ENCODE measurements at regions of chr11 and their contacts with region 1.

Region 1: GRCh38 chr11:102287964-102288724 is 29.1 kb upstream of the BIRC3 start:
- DNase-seq: no peak
- H3K4me3 ChIP-seq: no peak overlapping the region
- H3K27ac ChIP-seq: no peak overlapping the region
- H3K4me1 ChIP-seq: peaks cover 0 to 5% (median 0%) of the 10 kb centered on the region in 4 experiments; a peak in 2 of 7 replicates
- H3K27me3 ChIP-seq: no peaks in the 10 kb centered on the region
- CTCF ChIP-seq: peak in 2 of 3 experiments; percentile 49 to 76; a peak in 3 of 4 replicates
- EP300 ChIP-seq: no peak
- POLR2A ChIP-seq: no peak
- RAD21 ChIP-seq: peak; percentile 75 to 79

Region 2: GRCh38 chr11:102144357-102145342 is 143.5 kb before region 1 on chr11:
- CTCF ChIA-PET with region 1: no interaction called
- POLR2A ChIA-PET with region 1: no interaction called
- DNase-seq: no peak
- H3K4me3 ChIP-seq: no peak overlapping the region
- H3K27ac ChIP-seq: no peak overlapping the region
- H3K4me1 ChIP-seq: 0 out of 7 replicates have a peak, but pooled peaks cover 0 to 2% (median 0%) of the 10 kb centered on the region in 4 experiments
- H3K27me3 ChIP-seq: no peaks in the 10 kb centered on the region
- CTCF ChIP-seq: no peak
- EP300 ChIP-seq: no peak
- POLR2A ChIP-seq: no peak
- RAD21 ChIP-seq: no peak

Region 3: DNA sequence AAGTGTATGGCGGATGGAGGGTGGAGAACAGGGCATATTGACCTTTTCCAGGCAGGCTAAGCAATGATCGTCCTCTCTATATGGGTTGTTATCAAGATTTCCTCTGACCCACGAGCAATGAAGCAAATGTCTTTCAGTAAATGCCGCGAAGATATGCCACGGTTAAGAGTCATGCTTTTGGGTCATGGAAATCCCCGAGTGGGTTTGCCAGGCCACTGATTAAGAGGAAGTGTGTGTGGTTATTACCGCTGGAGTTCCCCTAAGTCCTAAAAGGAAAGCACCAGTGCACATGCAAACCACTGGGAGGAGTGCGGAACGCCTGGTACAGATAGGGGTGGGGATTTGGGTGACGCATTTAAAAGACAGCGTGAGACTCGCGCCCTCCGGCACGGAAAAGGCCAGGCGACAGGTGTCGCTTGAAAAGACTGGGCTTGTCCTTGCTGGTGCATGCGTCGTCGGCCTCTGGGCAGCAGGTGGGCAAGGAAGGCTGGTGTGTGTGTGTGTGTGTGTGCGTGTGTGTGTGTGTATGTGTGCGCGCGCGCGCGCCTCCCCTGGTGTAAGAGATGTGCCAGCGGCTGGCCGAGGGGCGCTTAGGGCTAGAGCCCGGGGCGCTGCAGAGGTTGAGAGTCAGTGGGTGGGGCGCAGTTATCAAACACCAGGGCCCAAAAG is 29.1 kb after region 1 on chr11 and contains the start of gene BIRC3:
- CTCF ChIA-PET with region 1: interaction called, 214 read pairs
- POLR2A ChIA-PET with region 1: no interaction called
- DNase-seq: peak; percentile 21 to 80
- H3K4me3 ChIP-seq: peak within 1 kb of the TSS; percentile 29 to 63 (median 58)
- H3K27ac ChIP-seq: no peak within 1 kb of the TSS
- H3K4me1 ChIP-seq: peaks cover 0 to 1% (median 0%) of the 10 kb centered on the region in 4 experiments; a peak in 1 of 7 replicates
- H3K27me3 ChIP-seq: no peaks in the 10 kb centered on the region
- CTCF ChIP-seq: peak in 2 of 3 experiments; percentile 10 to 26; a peak in 3 of 4 replicates
- EP300 ChIP-seq: no peak
- POLR2A ChIP-seq: no peak
- RAD21 ChIP-seq: peak in 1 of 2 experiments; percentile 6; a peak in 1 of 4 replicates
- total RNA-seq, gene BIRC3: 0.15 and 0.20 TPM in 2 replicates

Region 4: DNA sequence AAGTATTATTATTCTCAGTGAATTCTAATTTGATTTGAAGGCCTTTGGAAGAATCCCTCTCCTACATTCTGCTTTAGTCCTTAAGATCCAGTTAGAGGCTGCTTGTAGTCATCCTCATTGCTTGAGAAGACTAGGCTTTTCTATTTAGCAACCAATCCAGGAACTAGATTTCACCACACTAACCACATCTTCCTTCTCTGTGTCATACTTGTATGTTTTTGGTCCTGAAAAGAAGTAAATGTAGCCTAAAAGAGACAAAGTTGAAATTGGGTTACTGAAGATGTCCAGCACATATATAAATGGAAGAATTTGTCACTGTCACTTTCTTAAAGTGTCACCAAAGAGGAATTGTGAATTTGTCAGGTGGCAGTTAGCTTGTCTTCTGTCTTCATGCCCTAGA is 289.0 kb after region 1 on chr11:
- CTCF ChIA-PET with region 1: no interaction called
- POLR2A ChIA-PET with region 1: no interaction called
- DNase-seq: no peak
- H3K4me3 ChIP-seq: no peak overlapping the region
- H3K27ac ChIP-seq: no peak overlapping the region
- H3K4me1 ChIP-seq: no peaks in the 10 kb centered on the region
- H3K27me3 ChIP-seq: no peaks in the 10 kb centered on the region
- CTCF ChIP-seq: no peak
- EP300 ChIP-seq: no peak
- POLR2A ChIP-seq: no peak
- RAD21 ChIP-seq: no peak

Measured in H1 (cell line).